ENCODE measurements at regions of chr7 and their contacts with region 1.

Region 1: GRCh38 chr7:91034459-91035368 is 229.5 kb upstream of the FZD1 start:
- DNase-seq: peak; percentile 5
- ATAC-seq: no peak
- H3K4me3 ChIP-seq: no peak overlapping the region
- H3K27ac ChIP-seq: no peak overlapping the region
- H3K4me1 ChIP-seq: no peaks in the 10 kb centered on the region
- H3K27me3 ChIP-seq: no peaks in the 10 kb centered on the region
- CTCF ChIP-seq: peak; percentile 65

Region 2: GRCh38 chr7:90455163-90456030 is 579.3 kb before region 1 on chr7:
- CTCF ChIA-PET with region 1: interaction called, 6 read pairs
- POLR2A ChIA-PET with region 1: no interaction called
- in situ Hi-C with region 1: no loop called
- intact Hi-C with region 1: loop called (anchors 5 kb)
- DNase-seq: no peak
- ATAC-seq: peak; percentile 86
- H3K4me3 ChIP-seq: peak overlapping the region in 1 of 2 experiments; percentile 7; a peak in 1 of 4 replicates
- H3K27ac ChIP-seq: no peak overlapping the region
- H3K4me1 ChIP-seq: 0 out of 2 replicates have a peak, but pooled peaks cover 4% of the 10 kb centered on the region
- H3K27me3 ChIP-seq: peaks cover 2% of the 10 kb centered on the region; the same call in 1 of the 2 replicates
- CTCF ChIP-seq: peak; percentile 72

Region 3: DNA sequence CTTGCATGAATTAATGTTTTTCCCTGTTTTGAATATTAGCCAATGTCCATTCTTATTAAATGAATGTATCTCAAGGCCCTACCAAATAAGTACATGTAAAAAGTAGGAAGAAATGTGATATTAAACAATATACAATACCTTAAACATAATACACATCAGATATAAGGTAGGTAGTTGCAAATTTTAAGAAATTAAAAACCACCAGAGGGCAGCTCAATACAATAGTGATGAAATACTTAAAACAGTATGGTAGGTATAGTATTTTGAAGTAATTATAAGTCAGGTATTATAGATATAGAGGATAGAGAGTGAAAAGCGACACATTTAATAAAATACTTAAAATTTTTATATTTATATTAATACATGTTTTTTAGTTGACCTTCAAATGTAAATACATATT is 482.2 kb before region 1 on chr7:
- CTCF ChIA-PET with region 1: no interaction called
- POLR2A ChIA-PET with region 1: no interaction called
- in situ Hi-C with region 1: no loop called
- intact Hi-C with region 1: loop called (anchors 10 kb)
- DNase-seq: no peak
- ATAC-seq: no peak
- H3K4me3 ChIP-seq: no peak overlapping the region
- H3K27ac ChIP-seq: no peak overlapping the region
- H3K4me1 ChIP-seq: no peaks in the 10 kb centered on the region
- H3K27me3 ChIP-seq: no peaks in the 10 kb centered on the region
- CTCF ChIP-seq: no peak

Region 4: DNA sequence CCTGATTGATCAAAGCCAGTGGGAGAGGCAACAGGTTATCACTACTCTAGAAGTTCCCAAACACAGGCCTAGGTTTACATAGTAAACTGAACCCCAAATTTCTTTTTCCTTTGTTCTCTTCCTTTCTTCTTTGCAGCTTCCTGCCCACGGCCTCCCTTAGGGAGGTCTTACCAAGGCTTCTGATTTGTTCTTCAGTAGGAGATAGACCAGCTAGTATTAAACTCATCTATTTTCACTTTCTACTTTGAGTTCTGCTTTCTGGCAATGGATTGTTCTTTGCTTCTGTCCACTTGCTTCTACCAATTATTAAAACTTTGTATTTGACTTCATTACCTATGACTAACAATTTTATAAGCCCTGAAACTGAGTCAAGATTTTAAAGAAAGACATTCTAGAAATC is 21.6 kb before region 1 on chr7:
- CTCF ChIA-PET with region 1: interaction called, 10 read pairs
- POLR2A ChIA-PET with region 1: no interaction called
- in situ Hi-C with region 1: no loop called
- intact Hi-C with region 1: no loop called
- DNase-seq: no peak
- ATAC-seq: no peak
- H3K4me3 ChIP-seq: no peak overlapping the region
- H3K27ac ChIP-seq: no peak overlapping the region
- H3K4me1 ChIP-seq: no peaks in the 10 kb centered on the region
- H3K27me3 ChIP-seq: no peaks in the 10 kb centered on the region
- CTCF ChIP-seq: no peak